Caco-2 (cell line): ENCODE measurements at regions of chrX and their contacts with region 1.

Region 1: GRCh38 chrX:130079824-130080406 is 30.4 kb downstream of the ELF4 start:
- DNase-seq: peak; percentile 44 to 57
- H3K4me3 ChIP-seq: no peak overlapping the region
- H3K4me3 Mint-ChIP-seq: no peak overlapping the region
- H3K27ac Mint-ChIP-seq: no peak overlapping the region
- H3K4me1 ChIP-seq: no peaks in the 10 kb centered on the region
- H3K4me1 Mint-ChIP-seq: no peaks in the 10 kb centered on the region
- H3K27me3 ChIP-seq: no peaks in the 10 kb centered on the region
- H3K27me3 Mint-ChIP-seq: no peaks in the 10 kb centered on the region
- CTCF ChIP-seq: peak; percentile 35 to 72

Region 2: DNA sequence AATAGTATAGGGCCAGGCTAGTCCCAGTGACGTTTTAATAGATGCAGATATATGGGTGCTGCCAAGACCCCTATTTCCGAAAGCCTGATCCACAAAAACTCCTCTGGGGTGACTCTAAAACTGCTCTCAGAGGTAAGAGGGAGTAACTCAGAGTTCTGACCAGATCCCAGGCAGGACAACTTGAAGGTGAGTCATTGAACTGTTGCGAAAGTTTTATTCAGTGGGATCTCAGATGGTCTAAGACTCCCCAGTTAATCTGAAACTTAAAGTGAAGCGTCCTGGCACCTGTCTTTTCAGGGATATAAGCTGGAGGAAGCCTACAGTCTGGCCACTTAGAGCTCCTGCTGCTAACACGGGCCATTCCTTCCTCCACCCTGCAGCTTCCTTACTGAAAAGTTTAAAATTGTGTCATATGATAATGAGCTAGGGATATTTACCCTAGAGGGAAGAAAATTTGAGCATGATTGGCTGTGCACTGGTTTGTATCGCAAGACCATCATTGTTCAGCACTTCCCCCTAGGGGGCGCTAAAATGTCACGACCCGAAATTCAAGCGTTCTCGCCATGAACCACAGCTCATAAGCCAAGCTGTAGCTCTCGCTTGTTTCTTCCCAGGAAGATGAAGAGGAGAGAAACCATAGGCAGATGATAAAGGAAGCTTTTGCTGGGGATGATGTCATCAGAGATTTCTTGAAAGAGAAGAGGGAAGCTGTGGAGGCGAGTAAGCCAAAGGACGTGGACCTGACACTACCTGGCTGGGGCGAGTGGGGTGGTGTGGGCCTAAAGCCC is 154.4 kb before region 1 on chrX:
- CTCF ChIA-PET with region 1: interaction called, 6 read pairs
- POLR2A ChIA-PET with region 1: interaction called, 11 read pairs
- intact Hi-C with region 1: no loop called
- DNase-seq: peak; percentile 57 to 75
- H3K4me3 ChIP-seq: no peak overlapping the region
- H3K4me3 Mint-ChIP-seq: no peak overlapping the region
- H3K27ac Mint-ChIP-seq: no peak overlapping the region
- H3K4me1 ChIP-seq: no peaks in the 10 kb centered on the region
- H3K4me1 Mint-ChIP-seq: no peaks in the 10 kb centered on the region
- H3K27me3 ChIP-seq: no peaks in the 10 kb centered on the region
- H3K27me3 Mint-ChIP-seq: no peaks in the 10 kb centered on the region
- CTCF ChIP-seq: peak; percentile 54 to 59

Region 3: GRCh38 chrX:130024127-130024526 is 55.8 kb before region 1 on chrX:
- CTCF ChIA-PET with region 1: no interaction called
- POLR2A ChIA-PET with region 1: no interaction called
- intact Hi-C with region 1: no loop called
- DNase-seq: peak; percentile 23 to 35
- H3K4me3 ChIP-seq: no peak overlapping the region
- H3K4me3 Mint-ChIP-seq: no peak overlapping the region
- H3K27ac Mint-ChIP-seq: no peak overlapping the region
- H3K4me1 ChIP-seq: no peaks in the 10 kb centered on the region
- H3K4me1 Mint-ChIP-seq: no peaks in the 10 kb centered on the region
- H3K27me3 ChIP-seq: no peaks in the 10 kb centered on the region
- H3K27me3 Mint-ChIP-seq: no peaks in the 10 kb centered on the region
- CTCF ChIP-seq: no peak

Region 4: DNA sequence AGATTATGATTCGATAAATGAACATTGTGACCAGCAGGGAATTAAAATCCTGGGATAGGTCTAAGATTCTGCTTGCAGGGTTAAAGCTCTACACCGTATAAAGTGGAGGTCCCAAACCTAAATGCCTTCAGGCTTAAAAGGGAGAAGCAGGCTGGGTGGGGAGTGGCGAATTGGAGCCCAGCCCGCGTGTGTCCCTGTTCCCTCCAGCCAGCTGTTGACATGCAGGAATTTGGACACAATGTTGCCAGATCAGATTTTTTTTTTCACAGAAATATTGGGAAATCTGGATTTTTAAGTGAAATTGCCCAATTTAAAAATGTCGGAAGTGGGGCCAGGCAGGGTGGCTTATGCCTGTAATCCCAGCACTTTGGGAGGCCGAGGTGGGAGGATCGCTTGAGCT is 30.1 kb before region 1 on chrX:
- CTCF ChIA-PET with region 1: no interaction called
- POLR2A ChIA-PET with region 1: no interaction called
- intact Hi-C with region 1: no loop called
- DNase-seq: no peak
- H3K4me3 ChIP-seq: no peak overlapping the region
- H3K4me3 Mint-ChIP-seq: no peak overlapping the region
- H3K27ac Mint-ChIP-seq: no peak overlapping the region
- H3K4me1 ChIP-seq: no peaks in the 10 kb centered on the region
- H3K4me1 Mint-ChIP-seq: no peaks in the 10 kb centered on the region
- H3K27me3 ChIP-seq: no peaks in the 10 kb centered on the region
- H3K27me3 Mint-ChIP-seq: no peaks in the 10 kb centered on the region
- CTCF ChIP-seq: no peak

Region 5: GRCh38 chrX:130186651-130187050 is 106.7 kb after region 1 on chrX:
- CTCF ChIA-PET with region 1: interaction called, 12 read pairs
- POLR2A ChIA-PET with region 1: no interaction called
- intact Hi-C with region 1: no loop called
- DNase-seq: no peak
- H3K4me3 ChIP-seq: no peak overlapping the region
- H3K4me3 Mint-ChIP-seq: no peak overlapping the region
- H3K27ac Mint-ChIP-seq: no peak overlapping the region
- H3K4me1 ChIP-seq: no peaks in the 10 kb centered on the region
- H3K4me1 Mint-ChIP-seq: peaks cover 4% of the 10 kb centered on the region
- H3K27me3 ChIP-seq: no peaks in the 10 kb centered on the region
- H3K27me3 Mint-ChIP-seq: no peaks in the 10 kb centered on the region
- CTCF ChIP-seq: no peak

Region 6: DNA sequence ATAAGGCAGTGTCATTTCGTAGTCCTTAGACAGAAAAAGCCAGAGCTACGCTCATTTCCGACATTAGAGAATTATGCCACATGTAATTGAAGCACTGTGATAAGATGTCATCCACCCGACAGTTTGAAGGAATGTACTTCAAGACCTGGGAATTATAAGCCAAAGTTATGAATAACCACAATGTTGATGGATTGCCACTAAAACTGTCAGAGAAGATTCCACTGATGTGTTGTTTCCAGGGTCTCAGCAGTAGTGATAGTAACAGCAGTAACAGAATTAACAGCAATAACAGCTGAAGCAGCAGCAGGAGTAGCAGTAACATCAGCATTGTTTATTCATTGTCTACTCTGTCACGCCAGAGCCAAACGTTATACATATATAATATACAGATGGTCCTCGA is 116.6 kb after region 1 on chrX:
- CTCF ChIA-PET with region 1: interaction called, 9 read pairs
- POLR2A ChIA-PET with region 1: no interaction called
- intact Hi-C with region 1: loop called (anchors 1 kb)
- DNase-seq: no peak
- H3K4me3 ChIP-seq: no peak overlapping the region
- H3K4me3 Mint-ChIP-seq: no peak overlapping the region
- H3K27ac Mint-ChIP-seq: no peak overlapping the region
- H3K4me1 ChIP-seq: no peaks in the 10 kb centered on the region
- H3K4me1 Mint-ChIP-seq: no peaks in the 10 kb centered on the region
- H3K27me3 ChIP-seq: no peaks in the 10 kb centered on the region
- H3K27me3 Mint-ChIP-seq: no peaks in the 10 kb centered on the region
- CTCF ChIP-seq: no peak